ENCODE measurements at regions of chr19 and their contacts with region 1.

Region 1: DNA sequence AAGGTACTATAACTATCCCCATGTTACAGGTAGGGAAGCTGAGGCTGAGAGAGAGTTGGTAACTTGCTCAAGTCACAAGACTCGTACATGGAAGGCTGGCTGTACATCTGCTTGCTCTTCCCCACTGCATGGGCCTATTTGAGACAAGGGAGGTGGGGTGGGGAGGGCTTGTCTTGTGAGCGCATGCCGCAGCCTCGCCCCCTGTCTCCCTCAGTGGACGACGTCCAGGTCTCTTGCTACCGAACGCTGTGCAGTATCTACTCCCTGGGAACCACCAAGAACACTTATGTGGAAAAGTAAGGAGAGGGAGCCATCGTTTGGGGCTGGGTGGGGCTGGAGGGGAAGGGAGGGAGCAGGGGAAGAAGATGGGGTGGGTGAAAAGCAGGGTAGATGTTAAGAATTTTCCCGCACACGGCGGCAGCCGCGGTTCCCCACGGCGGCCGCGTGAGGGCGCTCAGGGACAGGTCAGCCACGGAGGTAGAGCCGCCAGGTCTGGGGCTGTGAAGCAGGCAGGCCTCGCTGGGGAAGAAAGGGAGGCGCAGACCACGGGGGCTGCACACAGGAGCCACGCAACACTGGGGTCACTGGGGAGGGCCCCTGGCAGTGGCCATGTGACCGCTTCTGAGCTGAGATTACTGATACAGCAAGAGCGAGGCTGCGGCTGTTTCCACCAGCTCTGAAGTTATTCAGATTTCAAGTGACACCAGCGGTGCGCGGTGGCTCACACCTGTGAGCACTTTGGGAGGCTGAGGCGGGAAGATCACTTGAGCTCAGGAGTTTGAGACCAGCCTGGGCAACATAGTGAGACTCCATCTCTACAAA is 81.5 kb downstream of the RYR1 start:
- DNase-seq: peak in 1 of 2 donors; percentile 39
- ATAC-seq: no peak
- H3K4me3 ChIP-seq: no peak overlapping the region
- H3K27ac ChIP-seq: peak overlapping the region; percentile 7 to 78 (median 60)
- H3K4me1 ChIP-seq: no peaks in the 10 kb centered on the region
- H3K27me3 ChIP-seq: no peaks in the 10 kb centered on the region
- CTCF ChIP-seq: peak in 4 of 5 experiments; percentile 30 to 69 (median 60)
- POLR2A ChIP-seq: no peak

Region 2: DNA sequence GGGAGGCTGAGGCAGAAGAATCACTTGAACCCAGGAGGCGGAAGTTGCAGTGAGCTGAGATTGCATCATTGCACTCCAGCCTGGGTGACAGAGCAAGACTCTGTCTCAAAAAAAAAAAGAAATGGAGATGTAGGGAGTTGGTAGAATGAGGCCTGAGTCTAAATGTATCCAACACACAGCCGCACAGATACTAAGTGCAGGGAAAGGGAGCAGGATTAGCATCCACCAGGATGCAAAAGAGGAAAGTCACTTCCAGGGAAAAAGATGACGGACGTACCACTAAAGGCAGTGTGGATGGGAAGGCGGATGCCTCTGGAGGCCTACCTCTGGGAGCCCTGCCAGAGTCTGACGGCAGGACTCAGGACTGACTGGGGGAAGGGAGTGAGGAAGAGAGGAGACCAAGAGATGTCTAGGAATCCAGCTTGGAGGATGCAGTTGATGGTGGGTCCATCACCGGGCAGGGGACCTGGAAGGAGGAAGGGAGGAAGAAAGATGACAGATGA is 105.3 kb before region 1 on chr19:
- in situ Hi-C with region 1: no loop called
- intact Hi-C with region 1: no loop called
- DNase-seq: no peak
- ATAC-seq: no peak
- H3K4me3 ChIP-seq: no peak overlapping the region
- H3K27ac ChIP-seq: no peak overlapping the region
- H3K4me1 ChIP-seq: no peaks in the 10 kb centered on the region
- H3K27me3 ChIP-seq: no peaks in the 10 kb centered on the region
- CTCF ChIP-seq: no peak
- POLR2A ChIP-seq: no peak

Region 3: DNA sequence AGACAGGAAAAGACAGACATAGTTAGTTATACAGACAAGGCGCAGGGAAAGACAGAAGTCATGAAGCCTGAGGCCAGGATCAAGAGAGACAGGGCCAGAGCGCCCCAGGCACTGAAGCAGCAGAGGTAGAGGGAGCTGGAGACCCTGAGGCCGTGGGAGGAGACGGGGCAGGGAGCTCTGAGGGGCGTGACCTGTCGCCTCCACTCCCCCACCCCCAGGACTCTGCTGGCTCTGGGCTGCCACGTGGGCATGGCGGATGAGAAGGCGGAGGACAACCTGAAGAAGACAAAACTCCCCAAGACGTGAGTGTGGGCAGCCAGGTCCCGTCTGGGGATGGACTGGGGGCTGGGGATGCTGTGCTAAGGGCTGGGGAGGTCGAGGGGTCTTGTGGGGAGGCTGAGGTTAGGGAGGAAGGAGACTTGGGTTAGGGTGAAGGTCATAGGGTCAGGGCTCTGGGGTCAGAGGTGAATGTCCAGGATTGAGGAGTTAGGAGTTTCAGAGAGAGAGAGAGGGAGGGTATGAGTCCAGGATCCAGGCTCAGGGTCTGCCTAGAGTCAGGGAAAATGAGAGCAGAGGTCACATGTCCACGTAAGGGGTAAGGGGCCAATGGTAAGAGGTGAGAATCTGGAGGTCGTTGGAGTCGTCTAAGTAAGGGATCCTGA is 50.5 kb before region 1 on chr19:
- in situ Hi-C with region 1: no loop called
- intact Hi-C with region 1: loop called (anchors 5 kb)
- DNase-seq: no peak
- ATAC-seq: no peak
- H3K4me3 ChIP-seq: no peak overlapping the region
- H3K27ac ChIP-seq: peak overlapping the region in 3 of 4 donors; percentile 14 to 57 (median 50)
- H3K4me1 ChIP-seq: peaks cover 0 to 6% of the 10 kb centered on the region in 2 donors
- H3K27me3 ChIP-seq: no peaks in the 10 kb centered on the region
- CTCF ChIP-seq: no peak
- POLR2A ChIP-seq: no peak

Region 4: DNA sequence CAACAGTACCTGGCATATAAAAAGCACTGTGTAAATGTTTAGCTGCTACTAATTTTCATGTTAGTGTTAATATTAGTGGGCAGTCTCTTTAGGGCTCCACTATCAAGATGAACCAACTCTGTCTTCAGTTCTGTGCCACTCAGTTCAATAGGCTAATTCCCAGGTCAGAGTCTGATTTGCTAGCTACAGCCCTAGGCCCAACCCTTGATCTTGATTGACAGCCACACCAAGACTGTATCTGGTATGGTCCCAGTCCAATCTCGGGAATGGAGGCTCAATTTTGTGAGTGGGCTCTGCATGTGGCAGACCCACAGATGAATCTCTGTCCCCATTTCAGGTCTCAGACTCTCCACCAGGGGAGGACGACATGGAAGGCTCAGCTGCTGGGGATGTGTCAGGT is 56.7 kb after region 1 on chr19:
- in situ Hi-C with region 1: no loop called
- intact Hi-C with region 1: loop called (anchors 1 kb)
- DNase-seq: no peak
- ATAC-seq: no peak
- H3K4me3 ChIP-seq: no peak overlapping the region
- H3K27ac ChIP-seq: peak overlapping the region in 2 of 4 donors; percentile 51 to 62
- H3K4me1 ChIP-seq: no peaks in the 10 kb centered on the region
- H3K27me3 ChIP-seq: no peaks in the 10 kb centered on the region
- CTCF ChIP-seq: no peak
- POLR2A ChIP-seq: no peak